Activated CD8-positive, alpha-beta T cell treated with anti-CD3 and anti-CD28 coated beads for 36 hours (primary cell): ENCODE measurements at regions of chr17 and their contacts with region 1.

Region 1: DNA sequence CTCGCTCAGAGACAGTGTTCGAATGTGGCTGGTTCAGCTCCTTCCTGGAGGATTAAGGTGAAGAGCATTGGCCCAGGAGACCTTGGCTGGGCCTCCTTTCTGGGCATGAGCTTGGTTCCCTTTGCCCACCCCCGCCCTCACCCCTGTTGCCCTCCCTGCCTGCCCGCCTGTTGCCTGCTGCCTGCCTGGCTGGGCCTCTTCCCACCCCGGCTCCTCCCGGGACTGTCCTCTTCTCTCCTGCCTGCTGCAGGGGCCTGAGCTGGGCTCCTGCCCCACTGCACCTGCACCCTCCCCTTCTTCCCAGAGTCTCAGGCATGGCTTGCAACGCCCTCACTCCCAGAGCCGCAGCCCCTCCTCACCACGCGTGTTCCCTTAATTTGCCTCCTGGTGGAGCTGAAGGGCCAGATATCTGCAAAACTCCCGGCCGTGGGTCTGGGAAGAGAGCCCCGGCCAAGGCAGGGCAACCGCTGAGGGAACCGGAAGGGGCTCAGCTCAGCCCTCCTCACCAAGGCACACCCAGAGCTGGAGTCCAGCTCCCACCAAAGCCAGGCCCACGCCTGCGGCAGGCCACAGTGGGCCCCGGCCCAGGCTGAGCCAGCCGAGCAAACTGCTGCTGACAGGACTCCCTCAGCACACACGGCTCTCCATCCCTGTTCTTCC is 31.2 kb downstream of the MNT start:
- DNase-seq: no peak
- ATAC-seq: no peak
- H3K4me3 Mint-ChIP-seq: no peak overlapping the region
- H3K27ac Mint-ChIP-seq: no peak overlapping the region
- H3K4me1 Mint-ChIP-seq: no peaks in the 10 kb centered on the region
- H3K27me3 Mint-ChIP-seq: no peaks in the 10 kb centered on the region
- CTCF ChIP-seq: no peak

Region 2: DNA sequence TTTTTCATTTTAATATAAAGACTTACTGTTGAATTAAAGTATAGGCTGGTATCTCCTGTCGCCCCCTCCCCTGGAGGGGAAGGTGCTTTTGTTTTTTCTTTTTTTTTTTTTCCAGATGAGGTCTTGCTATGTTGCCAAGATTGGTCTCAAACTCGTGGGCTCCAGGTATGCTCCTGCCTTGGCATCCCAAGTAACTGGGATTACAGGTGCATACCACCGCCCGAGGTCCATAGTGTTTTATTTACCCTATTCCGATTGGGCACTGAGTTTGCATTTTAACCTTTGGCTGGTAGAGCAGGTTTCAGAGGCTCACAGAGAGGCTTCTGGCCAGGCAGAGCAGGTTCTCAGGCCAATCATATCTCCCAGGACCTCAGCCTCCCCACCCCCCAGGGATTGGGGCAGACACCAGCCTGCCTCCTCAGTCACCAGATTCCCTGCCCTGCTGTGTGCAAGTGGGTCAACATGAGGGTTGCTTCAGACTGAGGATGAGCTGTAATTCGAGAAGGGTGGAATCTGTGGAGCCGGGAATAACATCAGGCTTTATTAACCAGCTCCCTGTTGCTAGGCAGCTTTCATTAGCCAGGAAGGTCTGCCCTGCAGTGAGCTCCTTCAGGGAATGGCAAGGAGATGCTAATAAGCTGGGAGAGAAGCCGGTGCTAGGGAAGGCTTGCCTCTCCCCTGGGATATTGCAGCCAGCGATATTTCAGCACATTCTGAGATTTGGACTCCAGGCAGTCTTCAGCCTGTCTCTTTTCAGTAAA is 22.0 kb before region 1 on chr17:
- CTCF ChIA-PET with region 1: interaction called, 11 read pairs
- POLR2A ChIA-PET with region 1: interaction called, 3 read pairs
- intact Hi-C with region 1: no loop called
- DNase-seq: no peak
- ATAC-seq: no peak
- H3K4me3 Mint-ChIP-seq: no peak overlapping the region
- H3K27ac Mint-ChIP-seq: no peak overlapping the region
- H3K4me1 Mint-ChIP-seq: peaks cover 9% of the 10 kb centered on the region
- H3K27me3 Mint-ChIP-seq: no peaks in the 10 kb centered on the region
- CTCF ChIP-seq: no peak

Region 3: GRCh38 chr17:2401426-2402221 is 31.9 kb after region 1 on chr17:
- CTCF ChIA-PET with region 1: no interaction called
- POLR2A ChIA-PET with region 1: no interaction called
- intact Hi-C with region 1: no loop called
- DNase-seq: peak; percentile 100
- ATAC-seq: peak; percentile 64
- H3K4me3 Mint-ChIP-seq: peak overlapping the region; percentile 97
- H3K27ac Mint-ChIP-seq: peak overlapping the region; percentile 94
- H3K4me1 Mint-ChIP-seq: peaks cover 41% of the 10 kb centered on the region
- H3K27me3 Mint-ChIP-seq: no peaks in the 10 kb centered on the region
- CTCF ChIP-seq: no peak